ENCODE measurements at regions of chr17 and their contacts with region 1.

Region 1: DNA sequence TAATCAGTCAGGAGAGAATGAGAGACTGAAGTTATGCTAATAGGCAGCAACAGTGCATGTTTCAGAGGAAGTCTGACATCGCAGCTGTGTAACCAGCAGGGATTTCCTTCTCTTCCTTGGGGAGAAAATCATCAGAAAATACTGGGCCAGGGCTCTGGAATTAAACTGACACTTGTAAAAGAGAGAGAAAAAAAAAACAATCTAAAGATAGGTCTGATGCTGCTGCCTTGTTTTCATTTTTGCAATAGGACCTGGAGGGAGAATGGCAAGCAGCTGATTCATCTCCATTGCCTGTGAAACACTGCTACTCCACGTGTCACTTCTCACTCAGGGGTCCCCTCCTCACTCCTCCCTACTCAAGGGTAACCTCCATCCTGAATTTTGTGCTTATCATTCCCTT is 17.7 kb upstream of the CORO6 start:
- DNase-seq: no peak
- H3K4me3 ChIP-seq: no peak overlapping the region
- H3K27ac ChIP-seq: peak overlapping the region in 3 of 4 donors; percentile 42 to 65 (median 63)
- H3K4me1 ChIP-seq: peaks cover 4 to 42% (median 13%) of the 10 kb centered on the region in 4 donors
- H3K27me3 ChIP-seq: no peaks in the 10 kb centered on the region
- CTCF ChIP-seq: no peak
- EP300 ChIP-seq: no peak
- POLR2A ChIP-seq: no peak

Region 2: DNA sequence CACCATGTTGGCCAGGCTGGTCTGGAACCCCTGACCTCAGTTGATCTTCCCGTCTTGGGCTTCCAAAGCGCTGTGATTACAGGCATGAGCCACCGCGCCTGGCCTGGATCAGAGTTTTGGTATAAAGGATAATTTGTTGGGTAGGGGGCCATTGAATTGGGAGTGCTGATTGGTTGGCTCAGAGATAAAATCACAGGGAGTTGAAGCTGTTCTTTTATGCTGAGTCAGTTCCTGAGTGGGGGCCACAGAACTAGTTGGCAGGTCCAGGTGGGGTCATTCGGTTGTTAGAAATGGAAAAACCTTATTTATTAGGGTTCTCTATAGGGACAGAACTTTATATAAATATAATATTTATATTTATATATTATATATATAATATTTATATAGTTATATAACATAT is 142.5 kb after region 1 on chr17:
- in situ Hi-C with region 1: loop called (anchors 10 to 25 kb)
- intact Hi-C with region 1: loop called (anchors 5 kb)
- DNase-seq: no peak
- H3K4me3 ChIP-seq: no peak overlapping the region
- H3K27ac ChIP-seq: no peak overlapping the region
- H3K4me1 ChIP-seq: peaks cover 0 to 7% (median 0%) of the 10 kb centered on the region in 4 donors
- H3K27me3 ChIP-seq: no peaks in the 10 kb centered on the region
- CTCF ChIP-seq: no peak
- EP300 ChIP-seq: no peak
- POLR2A ChIP-seq: no peak

Measured in transverse colon (tissue), 4 donors.